Left colon (tissue), 2 donors: ENCODE measurements at regions of chr2 and their contacts with region 1.

Region 1: GRCh38 chr2:166127217-166128155 is at the start of gene SCN1A:
- DNase-seq: no peak
- ATAC-seq: no peak
- total RNA-seq, gene SCN1A: not detected

Region 2: DNA sequence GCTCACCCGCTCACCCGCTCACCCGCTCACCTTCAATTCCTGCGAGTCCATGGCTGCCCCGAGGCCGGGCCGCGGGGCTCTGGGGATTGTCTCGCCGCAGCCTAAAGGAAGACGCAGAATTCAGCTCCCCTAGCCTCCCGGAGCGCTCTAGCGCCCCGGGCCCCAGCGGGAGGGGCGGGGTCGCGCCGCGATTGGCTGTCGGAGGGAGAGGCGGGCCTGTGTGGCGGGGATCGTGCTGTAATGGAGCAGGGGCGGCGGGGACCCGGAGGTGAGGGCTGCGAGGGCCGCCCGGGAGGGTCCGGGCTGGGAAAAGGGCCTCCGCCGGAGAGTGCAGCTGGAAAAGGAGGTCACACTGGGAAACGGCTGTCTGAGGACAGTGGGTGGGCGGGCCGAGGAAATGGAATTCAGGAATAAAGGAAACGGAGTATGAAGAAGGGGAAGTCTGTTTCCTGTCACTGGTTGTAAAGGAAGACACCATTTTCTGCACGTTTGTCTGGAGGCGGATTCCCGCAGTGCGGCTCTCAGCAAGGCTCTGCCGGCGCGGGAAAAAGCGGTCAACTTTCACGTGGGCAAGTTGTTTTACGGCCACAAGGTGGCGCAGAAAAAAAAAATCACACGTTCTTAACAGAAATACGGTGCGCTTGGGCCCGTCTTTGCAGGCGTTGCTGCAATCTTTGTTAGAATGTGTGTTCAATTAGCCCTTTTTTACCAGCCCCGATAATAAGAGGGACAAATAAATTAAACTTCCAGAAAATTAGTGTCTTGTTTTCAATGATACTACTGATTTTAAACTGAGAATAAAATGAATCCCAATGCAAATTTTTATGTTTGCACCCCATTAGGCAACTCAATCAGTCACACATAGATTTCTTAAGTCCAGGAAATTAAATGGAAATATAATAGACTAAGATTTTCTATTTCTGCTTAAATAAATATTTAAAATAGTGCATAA is 173.6 kb before region 1 on chr2 and contains the start of gene TTC21B:
- intact Hi-C with region 1: loop called in 1 of 2 experiments (anchors 5 kb)
- DNase-seq: peak; percentile 93 to 95
- ATAC-seq: peak; percentile 98
- total RNA-seq, gene TTC21B: 14.0 to 14.8 TPM

Region 3: DNA sequence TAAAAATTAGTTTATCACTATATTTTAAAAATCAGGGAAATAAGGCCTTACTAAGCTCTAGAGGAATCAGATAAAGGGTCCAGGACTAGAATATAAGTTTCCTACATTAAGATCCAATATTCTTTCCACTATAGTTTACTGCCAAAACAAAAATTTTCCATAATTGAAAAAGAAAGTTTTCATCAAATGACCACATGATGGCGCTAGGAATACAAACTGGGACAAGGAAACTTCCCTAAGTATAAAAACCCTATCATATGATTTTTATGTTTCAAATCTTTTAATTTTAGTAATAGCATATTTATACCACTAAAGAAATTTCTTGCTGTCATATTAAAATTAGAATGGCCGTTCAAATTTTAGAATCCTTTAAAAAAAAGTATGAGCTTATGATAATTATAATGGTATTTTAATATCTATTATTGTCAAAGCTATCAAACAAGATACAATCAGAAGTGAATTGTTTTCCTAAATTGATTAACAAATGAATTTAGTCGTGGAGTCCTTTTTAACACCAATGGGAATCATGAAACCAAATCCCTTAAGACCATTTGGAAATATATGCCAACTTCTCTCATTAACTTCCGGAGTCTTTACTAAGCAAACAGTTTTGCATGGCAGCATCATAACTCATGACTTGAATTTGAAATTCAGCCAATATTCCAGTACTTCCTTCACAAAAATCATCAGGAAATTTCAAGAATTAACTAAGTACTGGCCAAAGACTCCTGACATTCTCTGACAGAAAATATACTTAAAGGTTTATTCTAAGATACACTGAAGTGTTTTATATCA is 69.9 kb before region 1 on chr2:
- intact Hi-C with region 1: loop called in 1 of 2 experiments (anchors 5 kb)
- DNase-seq: no peak
- ATAC-seq: no peak

Region 4: DNA sequence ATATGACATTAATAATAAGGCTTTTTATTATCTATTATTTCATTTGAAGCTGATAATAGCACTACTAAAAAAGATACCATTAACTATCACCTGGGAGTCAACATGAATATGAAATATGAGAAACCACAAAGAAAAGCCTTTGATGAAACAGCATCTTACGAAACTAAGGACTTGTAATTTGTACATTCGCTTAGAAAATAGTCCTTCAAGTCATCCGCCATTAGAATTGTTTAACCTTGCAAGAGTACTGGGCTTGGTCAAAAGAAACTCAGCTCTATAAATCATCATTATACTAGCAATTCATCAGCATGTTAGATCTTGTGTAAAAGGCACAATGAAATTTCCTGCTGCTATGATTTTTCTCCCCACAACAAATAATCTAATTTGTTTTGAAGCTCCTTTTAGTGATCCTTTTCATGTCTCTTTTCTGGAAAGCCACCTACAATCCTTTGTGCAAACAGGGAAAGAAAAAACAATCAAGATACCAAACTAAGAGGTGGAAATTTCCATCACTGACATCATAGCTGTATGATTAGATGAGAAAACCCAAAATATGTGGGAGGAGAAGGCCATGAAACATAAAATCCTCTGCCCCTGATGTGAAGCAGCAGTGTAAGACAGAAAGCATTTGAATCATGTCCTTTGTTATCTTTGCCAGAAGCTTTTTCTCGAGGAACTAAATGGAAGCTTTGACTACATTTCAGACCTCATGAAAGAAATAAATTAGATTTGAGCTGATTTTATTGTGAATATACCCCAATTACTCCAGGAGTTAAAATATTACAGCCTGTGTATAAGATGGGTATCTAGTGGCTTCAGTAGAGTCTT is 217.0 kb after region 1 on chr2:
- intact Hi-C with region 1: no loop called
- DNase-seq: no peak
- ATAC-seq: no peak